Caco-2 (cell line): ENCODE measurements at regions of chr22 and their contacts with region 1.

Region 1: DNA sequence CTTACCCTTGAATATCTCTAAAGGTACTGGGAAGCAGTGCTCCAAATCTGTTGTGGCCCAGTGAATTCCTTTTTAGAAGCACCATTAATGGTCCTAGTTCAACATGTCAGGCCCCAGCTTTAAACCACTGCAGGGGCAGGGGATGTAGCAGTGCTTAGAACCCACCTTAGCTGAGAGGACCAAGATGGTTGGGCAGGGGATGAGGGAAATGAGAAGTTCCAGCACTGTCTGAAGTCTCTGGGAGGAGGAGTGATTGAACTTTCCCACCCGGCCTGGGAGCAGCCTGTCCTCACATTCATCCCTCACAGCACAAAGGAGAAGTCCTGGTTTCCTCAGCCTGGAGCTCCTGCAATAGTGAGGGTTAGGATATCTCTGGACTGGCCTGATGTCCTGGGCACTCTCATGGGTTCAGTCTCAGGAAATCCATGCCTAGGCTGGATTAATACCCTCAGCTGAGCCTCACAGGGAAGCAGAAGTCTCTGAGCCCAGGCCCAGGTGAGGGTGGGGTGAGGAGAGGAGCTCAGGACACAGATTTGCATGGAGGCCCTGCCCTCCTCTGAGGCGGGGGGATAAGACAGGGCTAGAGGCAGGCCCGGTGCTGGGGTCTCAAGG is 28.6 kb upstream of the PRAME start:
- DNase-seq: no peak
- H3K4me3 ChIP-seq: no peak overlapping the region
- H3K4me3 Mint-ChIP-seq: no peak overlapping the region
- H3K27ac Mint-ChIP-seq: no peak overlapping the region
- H3K4me1 ChIP-seq: no peaks in the 10 kb centered on the region
- H3K4me1 Mint-ChIP-seq: no peaks in the 10 kb centered on the region
- H3K27me3 ChIP-seq: no peaks in the 10 kb centered on the region
- H3K27me3 Mint-ChIP-seq: peaks cover 20% of the 10 kb centered on the region
- CTCF ChIP-seq: no peak

Region 2: DNA sequence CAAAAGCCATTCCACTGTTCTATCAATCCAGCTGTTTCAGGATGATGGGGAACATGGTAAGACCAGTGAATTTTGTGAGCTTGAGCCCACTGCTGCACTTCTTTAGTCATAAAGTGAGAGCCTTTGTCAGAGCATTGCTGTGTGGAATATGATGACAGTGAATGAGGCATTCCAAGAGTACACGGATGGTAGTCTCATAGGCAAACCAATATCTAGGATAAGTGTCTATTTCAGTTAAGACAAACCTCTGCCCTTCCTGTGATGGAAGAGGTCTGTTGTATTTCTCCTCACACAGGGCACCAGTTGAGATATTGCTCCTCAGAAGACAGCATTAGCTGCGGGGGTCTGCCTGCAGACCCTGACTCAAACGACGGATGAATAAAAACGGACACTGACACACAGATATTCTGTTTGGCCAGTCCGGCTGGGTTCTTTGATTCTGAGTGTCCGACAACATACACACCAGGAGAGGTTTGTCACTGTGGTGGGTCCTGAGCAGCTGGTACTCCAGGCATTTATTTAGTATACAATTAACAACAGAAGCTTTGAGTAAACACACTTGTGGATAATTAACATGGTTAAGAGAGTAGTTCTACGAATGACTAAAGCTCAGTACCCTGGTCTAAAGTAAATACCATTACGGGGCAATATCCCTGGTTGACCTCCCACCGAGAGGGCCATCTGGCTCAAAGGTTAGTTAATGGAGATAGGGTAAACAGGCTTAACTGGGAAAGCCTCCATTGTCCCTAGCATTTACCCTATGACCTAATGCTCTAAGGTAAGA is 200.9 kb before region 1 on chr22:
- CTCF ChIA-PET with region 1: no interaction called
- POLR2A ChIA-PET with region 1: no interaction called
- intact Hi-C with region 1: no loop called
- DNase-seq: no peak
- H3K4me3 ChIP-seq: no peak overlapping the region
- H3K4me3 Mint-ChIP-seq: no peak overlapping the region
- H3K27ac Mint-ChIP-seq: no peak overlapping the region
- H3K4me1 ChIP-seq: peaks cover 3% of the 10 kb centered on the region; the same call in 1 of the 2 replicates
- H3K4me1 Mint-ChIP-seq: peaks cover 15% of the 10 kb centered on the region
- H3K27me3 ChIP-seq: no peaks in the 10 kb centered on the region
- H3K27me3 Mint-ChIP-seq: peaks cover 2% of the 10 kb centered on the region
- CTCF ChIP-seq: no peak

Region 3: DNA sequence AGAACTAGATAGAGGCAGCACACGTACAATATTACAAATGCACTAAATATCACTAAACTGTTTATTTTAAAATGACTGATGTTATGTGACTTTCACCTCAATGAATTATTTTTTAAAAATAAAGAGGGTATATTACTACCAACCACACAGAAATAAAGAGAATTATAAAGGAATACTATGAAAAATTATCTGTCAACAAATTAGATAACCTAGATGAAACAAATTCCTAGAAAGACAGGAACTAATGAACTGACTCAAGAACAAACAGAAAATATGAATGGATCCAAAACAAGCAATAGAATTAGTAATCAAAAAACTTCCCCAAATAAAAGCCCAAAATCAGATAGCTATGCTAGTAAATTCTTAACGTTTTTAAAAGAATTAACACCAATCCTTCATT is 89.4 kb before region 1 on chr22:
- CTCF ChIA-PET with region 1: no interaction called
- POLR2A ChIA-PET with region 1: no interaction called
- intact Hi-C with region 1: no loop called
- DNase-seq: no peak
- H3K4me3 ChIP-seq: no peak overlapping the region
- H3K4me3 Mint-ChIP-seq: no peak overlapping the region
- H3K27ac Mint-ChIP-seq: no peak overlapping the region
- H3K4me1 ChIP-seq: no peaks in the 10 kb centered on the region
- H3K4me1 Mint-ChIP-seq: no peaks in the 10 kb centered on the region
- H3K27me3 ChIP-seq: no peaks in the 10 kb centered on the region
- H3K27me3 Mint-ChIP-seq: no peaks in the 10 kb centered on the region
- CTCF ChIP-seq: no peak

Region 4: DNA sequence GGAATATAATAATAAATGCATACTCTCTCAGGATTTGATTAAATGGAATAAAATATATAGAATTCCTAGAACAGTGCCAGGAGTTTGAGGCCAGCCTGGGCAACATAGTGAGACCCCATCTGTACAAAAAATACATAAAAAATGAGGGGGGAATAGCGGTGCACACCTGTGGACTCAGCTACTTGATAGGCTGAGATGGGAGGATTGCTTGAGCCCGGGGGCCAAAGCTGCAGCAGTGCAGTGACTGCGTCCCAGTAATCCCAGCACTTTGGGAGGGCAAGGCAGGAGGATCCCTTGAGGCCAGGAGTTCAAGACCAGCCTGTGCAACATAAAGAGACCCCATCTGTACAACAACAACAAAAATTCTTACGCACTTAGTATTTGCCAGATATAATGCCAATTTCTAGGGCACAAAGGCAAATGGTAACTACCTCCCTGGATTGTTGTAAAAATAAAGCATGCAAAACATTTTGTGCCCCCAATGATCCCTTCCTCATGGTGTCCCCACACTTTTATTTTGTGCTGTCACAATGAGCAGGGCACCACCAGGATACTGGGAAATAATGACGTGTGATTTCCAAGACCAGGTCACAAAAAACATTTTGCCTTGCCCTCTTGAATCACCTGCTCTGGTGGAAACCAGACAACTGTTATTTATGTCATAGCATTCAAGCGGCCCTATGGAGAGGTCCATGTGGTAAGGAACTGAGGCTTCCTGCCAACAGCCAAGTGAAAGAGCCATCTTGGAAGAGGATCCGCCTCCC is 49.3 kb before region 1 on chr22:
- CTCF ChIA-PET with region 1: no interaction called
- POLR2A ChIA-PET with region 1: no interaction called
- intact Hi-C with region 1: no loop called
- DNase-seq: no peak
- H3K4me3 ChIP-seq: no peak overlapping the region
- H3K4me3 Mint-ChIP-seq: no peak overlapping the region
- H3K27ac Mint-ChIP-seq: no peak overlapping the region
- H3K4me1 ChIP-seq: no peaks in the 10 kb centered on the region
- H3K4me1 Mint-ChIP-seq: no peaks in the 10 kb centered on the region
- H3K27me3 ChIP-seq: no peaks in the 10 kb centered on the region
- H3K27me3 Mint-ChIP-seq: peaks cover 10% of the 10 kb centered on the region
- CTCF ChIP-seq: no peak

Region 5: DNA sequence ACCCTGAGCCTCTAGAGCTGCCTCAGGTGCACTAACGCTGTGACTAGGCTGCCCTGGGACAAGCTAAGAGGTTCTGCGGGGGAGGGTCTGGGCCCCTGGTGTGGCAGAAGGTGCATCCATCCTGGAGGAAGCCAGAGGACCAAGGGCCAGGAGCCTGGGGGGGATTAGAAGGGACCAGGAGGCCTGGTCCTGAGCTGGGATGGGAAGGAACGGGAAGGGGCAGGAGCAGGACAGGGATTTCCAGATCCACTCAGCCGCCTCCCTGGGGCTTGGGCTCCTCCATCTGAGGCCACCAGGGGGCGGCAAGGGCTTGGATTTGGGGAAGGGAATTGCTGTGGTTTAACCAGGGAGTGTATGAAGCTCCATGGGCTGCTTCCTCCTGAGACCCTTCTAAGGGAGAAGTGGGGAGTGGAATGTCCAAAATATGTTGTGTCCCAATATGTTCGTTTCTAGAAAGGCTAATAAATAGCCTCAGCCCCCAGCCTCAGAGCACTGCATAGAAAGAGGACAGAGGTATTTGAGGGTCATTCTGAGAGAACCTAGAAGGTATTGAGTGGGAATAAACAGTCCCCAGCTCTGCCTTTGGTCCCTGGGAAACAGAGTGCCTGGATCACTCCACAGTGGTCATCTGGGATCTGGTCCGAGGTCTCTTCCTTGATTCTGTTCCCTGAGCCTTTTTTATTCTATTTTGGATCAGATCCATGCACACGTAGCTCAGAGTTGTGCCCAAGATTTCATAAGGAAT is 11.3 kb before region 1 on chr22:
- CTCF ChIA-PET with region 1: interaction called, 29 read pairs
- POLR2A ChIA-PET with region 1: no interaction called
- intact Hi-C with region 1: no loop called
- DNase-seq: peak; percentile 57 to 71
- H3K4me3 ChIP-seq: no peak overlapping the region
- H3K4me3 Mint-ChIP-seq: no peak overlapping the region
- H3K27ac Mint-ChIP-seq: no peak overlapping the region
- H3K4me1 ChIP-seq: no peaks in the 10 kb centered on the region
- H3K4me1 Mint-ChIP-seq: no peaks in the 10 kb centered on the region
- H3K27me3 ChIP-seq: no peaks in the 10 kb centered on the region
- H3K27me3 Mint-ChIP-seq: peaks cover 3% of the 10 kb centered on the region
- CTCF ChIP-seq: peak; percentile 81 to 90